Heart right ventricle (tissue), 16 donors: ENCODE measurements at regions of chr6 and their contacts with region 1.

Region 1: GRCh38 chr6:6331946-6332601 is 11.6 kb upstream of the F13A1 start:
- DNase-seq: no peak
- ATAC-seq: peak in 7 of 8 donors; percentile 39 to 73 (median 57)
- H3K4me3 ChIP-seq: no peak overlapping the region
- H3K27ac ChIP-seq: peak overlapping the region in 7 of 10 donors; percentile 23 to 84 (median 67)
- H3K4me1 ChIP-seq: peaks cover 0 to 53% (median 21%) of the 10 kb centered on the region in 9 donors
- H3K27me3 ChIP-seq: no peaks in the 10 kb centered on the region
- CTCF ChIP-seq: no peak

Region 2: DNA sequence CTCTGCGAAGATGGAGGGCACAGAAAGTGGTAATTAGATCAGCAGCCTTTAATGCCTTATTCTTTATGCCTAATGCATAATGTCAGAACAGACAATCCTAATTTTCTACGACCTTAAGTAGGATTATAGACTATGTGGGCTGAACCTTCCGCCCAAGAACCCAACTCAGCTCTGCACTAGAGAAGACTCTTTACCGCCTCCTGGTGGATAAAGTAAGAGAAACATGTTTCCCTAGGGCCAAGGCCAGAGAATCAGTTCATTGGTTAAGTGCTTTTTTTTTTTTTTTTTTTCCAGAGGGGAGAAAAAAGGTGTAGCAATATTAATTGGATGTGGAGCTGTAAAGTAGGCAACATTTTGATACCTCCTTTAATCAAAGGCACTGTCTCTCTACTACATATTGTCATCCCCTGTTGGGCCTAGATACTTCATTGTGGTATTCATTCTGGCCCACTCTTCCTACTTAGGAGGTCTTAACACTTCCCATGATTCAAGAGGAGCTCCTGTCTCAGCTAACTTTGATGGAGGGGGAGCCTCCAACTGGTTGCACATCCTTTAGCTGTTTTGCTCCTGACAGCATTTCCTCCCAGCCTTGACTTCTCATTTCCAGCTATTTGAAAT is 200.5 kb before region 1 on chr6:
- intact Hi-C with region 1: no loop called
- DNase-seq: peak in 1 of 2 donors; percentile 13
- ATAC-seq: no peak
- H3K4me3 ChIP-seq: no peak overlapping the region
- H3K27ac ChIP-seq: no peak overlapping the region
- H3K4me1 ChIP-seq: no peaks in the 10 kb centered on the region
- H3K27me3 ChIP-seq: no peaks in the 10 kb centered on the region
- CTCF ChIP-seq: peak in 7 of 9 donors; percentile 10 to 57 (median 38)

Region 3: GRCh38 chr6:6277413-6277812 is 54.7 kb before region 1 on chr6:
- intact Hi-C with region 1: no loop called
- DNase-seq: no peak
- ATAC-seq: peak in 1 of 8 donors; percentile 33
- H3K4me3 ChIP-seq: no peak overlapping the region
- H3K27ac ChIP-seq: no peak overlapping the region
- H3K4me1 ChIP-seq: no peaks in the 10 kb centered on the region
- H3K27me3 ChIP-seq: peaks cover 0 to 17% (median 0%) of the 10 kb centered on the region in 7 donors
- CTCF ChIP-seq: no peak

Region 4: DNA sequence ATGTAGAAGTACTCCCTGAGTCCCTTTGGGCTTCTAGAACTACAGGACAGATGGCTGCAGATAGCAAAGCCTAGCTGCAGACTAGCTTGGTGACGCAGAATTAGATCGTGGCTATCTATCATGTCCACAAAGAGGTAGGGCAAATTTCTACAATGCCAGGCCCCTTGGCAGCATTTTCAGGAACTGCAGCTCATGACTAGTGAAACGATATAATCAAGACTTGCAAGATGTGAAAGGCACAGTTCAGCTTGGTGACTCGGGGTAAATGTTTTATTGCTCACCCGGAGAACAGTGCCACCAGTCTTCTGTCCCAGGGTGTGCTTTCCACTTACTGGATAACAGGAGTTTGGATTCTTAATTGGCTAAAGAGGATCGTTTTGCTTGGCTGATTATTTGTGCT is 147.7 kb after region 1 on chr6:
- intact Hi-C with region 1: loop called in 1 of 10 experiments (anchors 10 kb)
- DNase-seq: no peak
- ATAC-seq: peak in 3 of 8 donors; percentile 37 to 71 (median 70)
- H3K4me3 ChIP-seq: no peak overlapping the region
- H3K27ac ChIP-seq: no peak overlapping the region
- H3K4me1 ChIP-seq: peaks cover 0 to 6% (median 0%) of the 10 kb centered on the region in 9 donors
- H3K27me3 ChIP-seq: peaks cover 0 to 14% (median 0%) of the 10 kb centered on the region in 7 donors
- CTCF ChIP-seq: peak in 7 of 9 donors; percentile 10 to 35 (median 21)